Naive thymus-derived CD4-positive, alpha-beta T cell (primary cell): ENCODE measurements at regions of chr1 and their contacts with region 1.

Region 1: DNA sequence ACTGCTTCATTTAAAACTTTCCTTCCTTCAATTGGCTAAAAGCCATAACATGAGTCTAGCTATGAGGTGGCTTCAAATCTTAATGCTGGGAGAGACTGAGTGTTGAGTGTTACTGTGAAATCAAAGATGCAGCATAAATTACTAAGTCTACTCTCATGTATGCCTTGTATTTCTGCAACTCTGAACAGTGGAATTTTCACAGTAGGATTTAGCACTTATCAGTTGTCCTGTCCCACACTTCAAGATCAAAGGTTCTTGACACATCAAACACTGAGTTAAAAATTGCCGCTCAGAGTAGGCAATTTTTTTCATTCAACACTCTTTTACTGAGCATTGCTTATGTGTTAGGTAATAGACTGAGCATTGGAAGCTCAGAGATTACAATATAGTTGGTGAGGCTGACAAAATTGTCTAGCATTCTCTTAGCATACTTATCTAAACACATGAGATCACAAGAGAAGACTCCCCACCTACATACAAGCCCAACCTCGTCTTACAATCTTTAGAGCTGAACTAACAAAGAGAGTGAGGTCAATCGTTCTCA is 56.4 kb upstream of the ADORA3 start:
- DNase-seq: no peak
- ATAC-seq: no peak
- H3K4me3 ChIP-seq: no peak overlapping the region
- H3K4me3 Mint-ChIP-seq: no peak overlapping the region
- H3K27ac ChIP-seq: no peak overlapping the region
- H3K27ac Mint-ChIP-seq: no peak overlapping the region
- H3K4me1 ChIP-seq: no peaks in the 10 kb centered on the region
- H3K4me1 Mint-ChIP-seq: peaks cover 0 to 6% (median 4%) of the 10 kb centered on the region in 7 donors
- H3K27me3 ChIP-seq: no peaks in the 10 kb centered on the region
- H3K27me3 Mint-ChIP-seq: peaks cover 0 to 4% (median 0%) of the 10 kb centered on the region in 5 donors

Region 2: GRCh38 chr1:110746579-110747160 is 813.1 kb before region 1 on chr1:
- CTCF ChIA-PET with region 1: no interaction called
- POLR2A ChIA-PET with region 1: no interaction called
- intact Hi-C with region 1: no loop called
- DNase-seq: peak; percentile 14 to 62 (median 44)
- ATAC-seq: peak; percentile 46
- H3K4me3 ChIP-seq: no peak overlapping the region
- H3K4me3 Mint-ChIP-seq: no peak overlapping the region
- H3K27ac ChIP-seq: no peak overlapping the region
- H3K27ac Mint-ChIP-seq: no peak overlapping the region
- H3K4me1 ChIP-seq: no peaks in the 10 kb centered on the region
- H3K4me1 Mint-ChIP-seq: no peaks in the 10 kb centered on the region
- H3K27me3 ChIP-seq: no peaks in the 10 kb centered on the region
- H3K27me3 Mint-ChIP-seq: peaks cover 25 to 49% (median 30%) of the 10 kb centered on the region in 5 donors

Region 3: DNA sequence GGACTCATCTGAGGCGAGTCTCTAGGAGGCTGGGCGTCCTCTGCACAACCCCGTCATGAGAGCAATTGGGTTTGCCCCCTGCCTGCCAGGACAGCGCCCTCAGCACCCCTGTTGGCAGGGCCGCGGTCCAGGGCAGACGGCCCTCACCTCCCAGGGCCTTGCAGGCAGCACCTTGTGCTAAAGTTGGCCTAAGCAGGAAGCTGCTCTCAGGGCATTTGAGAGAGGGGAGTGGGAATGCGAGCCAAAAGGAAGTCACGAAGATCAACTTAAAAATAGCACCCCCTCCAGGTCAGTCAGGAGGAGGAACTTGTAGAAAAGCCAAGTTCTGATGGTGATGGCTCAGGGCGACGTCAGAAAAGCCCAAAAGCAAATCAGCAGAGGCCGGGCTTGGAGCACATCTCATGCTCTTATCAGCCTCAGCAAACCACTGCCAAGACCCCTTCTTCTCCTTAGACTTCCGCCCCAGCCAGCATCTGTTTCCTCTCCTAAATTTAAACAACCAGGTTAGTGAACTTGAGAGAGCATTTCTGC is 43.7 kb before region 1 on chr1:
- CTCF ChIA-PET with region 1: no interaction called
- POLR2A ChIA-PET with region 1: no interaction called
- intact Hi-C with region 1: loop called in 1 of 2 experiments (anchors 5 kb)
- DNase-seq: peak in 8 of 9 donors; percentile 23 to 69 (median 62)
- ATAC-seq: peak; percentile 79
- H3K4me3 ChIP-seq: peak overlapping the region; percentile 53
- H3K4me3 Mint-ChIP-seq: peak overlapping the region; percentile 71 to 89 (median 84)
- H3K27ac ChIP-seq: peak overlapping the region; percentile 43
- H3K27ac Mint-ChIP-seq: peak overlapping the region in 8 of 9 donors; percentile 69 to 90 (median 79)
- H3K4me1 ChIP-seq: peaks cover 38 to 43% of the 10 kb centered on the region in 2 donors
- H3K4me1 Mint-ChIP-seq: peaks cover 27 to 42% (median 38%) of the 10 kb centered on the region in 7 donors
- H3K27me3 ChIP-seq: no peaks in the 10 kb centered on the region
- H3K27me3 Mint-ChIP-seq: peaks cover 0 to 2% (median 0%) of the 10 kb centered on the region in 5 donors

Region 4: DNA sequence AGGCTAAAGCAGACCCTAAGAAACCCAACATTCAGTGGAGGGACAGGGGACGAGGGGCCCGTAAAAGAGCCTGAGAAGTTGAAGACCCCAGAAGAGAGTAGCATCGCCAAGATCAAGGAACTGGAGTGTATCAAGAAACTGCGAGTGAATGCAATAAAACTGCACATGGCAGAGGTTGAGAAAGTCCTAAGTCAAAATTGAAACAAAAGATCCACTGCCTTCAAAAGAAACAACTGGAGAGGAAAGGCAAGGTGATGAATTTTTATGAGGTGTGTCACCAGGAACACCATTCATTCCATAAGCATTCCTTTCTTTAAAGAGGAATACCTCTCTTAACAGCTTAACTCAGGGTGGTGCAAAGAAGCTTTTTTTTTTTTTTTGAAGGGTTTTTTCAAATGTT is 18.1 kb before region 1 on chr1:
- CTCF ChIA-PET with region 1: no interaction called
- POLR2A ChIA-PET with region 1: no interaction called
- intact Hi-C with region 1: no loop called
- DNase-seq: no peak
- ATAC-seq: no peak
- H3K4me3 ChIP-seq: no peak overlapping the region
- H3K4me3 Mint-ChIP-seq: no peak overlapping the region
- H3K27ac ChIP-seq: no peak overlapping the region
- H3K27ac Mint-ChIP-seq: no peak overlapping the region
- H3K4me1 ChIP-seq: no peaks in the 10 kb centered on the region
- H3K4me1 Mint-ChIP-seq: peaks cover 0 to 11% (median 4%) of the 10 kb centered on the region in 7 donors
- H3K27me3 ChIP-seq: no peaks in the 10 kb centered on the region
- H3K27me3 Mint-ChIP-seq: peaks cover 0 to 36% (median 0%) of the 10 kb centered on the region in 5 donors

Region 5: DNA sequence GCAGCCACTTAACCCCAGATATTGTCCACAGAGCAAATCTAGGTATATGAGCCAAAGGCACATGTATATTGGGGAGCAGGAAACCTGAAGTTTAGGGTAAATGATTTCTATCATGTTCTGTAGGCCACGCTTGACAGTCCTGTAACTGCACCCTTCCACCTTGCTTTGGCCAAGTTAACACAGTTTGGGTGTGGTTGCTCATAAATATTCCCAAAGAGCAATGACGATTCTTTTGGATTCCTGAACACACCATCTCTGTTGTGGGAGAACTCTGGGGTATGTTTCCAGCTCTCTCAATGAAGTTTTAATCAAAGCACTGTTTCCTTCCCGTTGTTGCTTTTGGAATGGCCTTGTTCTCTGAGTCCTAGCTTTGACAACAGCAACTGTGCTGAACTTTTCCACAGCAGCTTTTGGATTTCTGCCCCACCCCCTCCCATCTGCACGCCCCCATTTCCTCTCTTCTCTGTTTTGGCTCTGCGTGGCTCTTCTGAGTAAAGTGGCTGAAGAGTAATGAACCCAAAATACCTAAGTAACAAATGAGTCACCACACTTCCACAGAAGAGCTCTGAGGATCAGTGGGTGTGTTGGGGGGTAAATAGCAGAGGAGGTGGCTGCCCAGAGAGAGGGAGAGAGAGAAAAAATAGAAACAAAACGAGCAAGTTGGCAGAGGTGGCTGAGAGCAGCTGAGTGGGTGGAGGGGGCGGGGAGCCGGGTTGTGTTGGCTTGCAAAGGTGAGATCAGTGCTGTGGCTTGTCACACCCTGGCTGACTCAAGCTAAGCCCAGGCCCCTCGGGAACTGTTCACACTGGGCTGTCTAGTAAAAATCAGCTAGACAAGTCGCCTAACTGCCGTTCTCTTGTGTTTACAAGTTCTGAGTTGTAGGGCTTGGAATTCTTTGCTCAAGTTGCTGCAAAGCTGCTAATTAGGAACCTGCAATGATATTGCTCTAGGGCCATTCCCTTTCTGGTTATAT is 32.9 kb after region 1 on chr1:
- CTCF ChIA-PET with region 1: interaction called, 3 read pairs
- POLR2A ChIA-PET with region 1: interaction called, 3 read pairs
- intact Hi-C with region 1: loop called in 1 of 2 experiments (anchors 1 kb)
- DNase-seq: peak; percentile 22 to 86 (median 56)
- ATAC-seq: peak; percentile 91
- H3K4me3 ChIP-seq: peak overlapping the region; percentile 29
- H3K4me3 Mint-ChIP-seq: peak overlapping the region; percentile 52 to 82 (median 78)
- H3K27ac ChIP-seq: peak overlapping the region; percentile 62
- H3K27ac Mint-ChIP-seq: peak overlapping the region; percentile 83 to 95 (median 91)
- H3K4me1 ChIP-seq: peaks cover 55 to 65% of the 10 kb centered on the region in 2 donors
- H3K4me1 Mint-ChIP-seq: peaks cover 46 to 72% (median 62%) of the 10 kb centered on the region in 7 donors
- H3K27me3 ChIP-seq: no peaks in the 10 kb centered on the region
- H3K27me3 Mint-ChIP-seq: peaks cover 0 to 2% (median 0%) of the 10 kb centered on the region in 5 donors

Region 6: DNA sequence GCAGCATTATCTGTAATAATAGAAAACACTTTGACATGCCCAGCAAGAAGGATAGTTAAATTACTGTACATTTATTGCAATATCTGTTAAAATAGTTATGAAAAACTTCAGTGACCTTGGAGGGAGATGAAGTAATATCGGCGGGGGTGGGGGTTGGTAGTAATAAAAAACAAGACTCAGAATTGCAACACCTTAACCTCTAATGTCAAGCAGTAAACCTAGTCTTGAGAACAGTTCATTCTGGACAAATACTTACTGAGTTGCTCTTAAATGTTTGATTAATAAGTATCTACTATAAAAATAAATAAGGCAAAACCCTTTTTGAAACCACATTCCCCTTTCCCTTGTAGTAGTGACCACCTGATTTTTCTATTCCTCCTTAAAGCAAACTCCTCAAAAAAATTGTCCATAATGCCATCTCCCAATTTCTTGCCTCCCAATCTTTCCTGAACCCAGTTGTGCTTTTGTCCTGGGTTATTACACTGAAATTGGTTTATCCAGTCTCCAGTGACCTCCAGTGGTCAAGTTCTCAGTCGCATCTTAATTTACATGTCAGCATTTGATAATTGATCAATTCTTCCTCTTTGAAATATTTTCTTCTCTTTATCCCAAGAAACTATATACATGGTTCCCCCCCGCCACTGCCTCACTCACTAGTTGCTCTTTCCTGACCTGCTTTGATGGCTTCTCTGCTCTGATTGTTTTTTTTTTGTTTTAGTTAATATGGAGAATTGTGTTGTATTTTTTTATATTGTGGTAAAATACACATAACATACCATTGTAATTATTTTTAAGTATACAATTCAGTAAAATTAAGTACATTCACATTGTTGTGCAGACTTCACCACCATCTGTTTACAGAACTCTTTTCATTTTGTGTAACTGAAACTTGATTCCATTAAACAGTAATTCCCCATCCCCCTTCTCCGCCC is 96.5 kb after region 1 on chr1:
- CTCF ChIA-PET with region 1: interaction called, 4 read pairs
- POLR2A ChIA-PET with region 1: no interaction called
- intact Hi-C with region 1: loop called in 1 of 2 experiments (anchors 1 kb)
- DNase-seq: peak in 4 of 9 donors; percentile 15 to 36 (median 20)
- ATAC-seq: no peak
- H3K4me3 ChIP-seq: no peak overlapping the region
- H3K4me3 Mint-ChIP-seq: peak overlapping the region in 6 of 10 donors; percentile 2 to 52 (median 38)
- H3K27ac ChIP-seq: no peak overlapping the region
- H3K27ac Mint-ChIP-seq: peak overlapping the region in 8 of 9 donors; percentile 9 to 84 (median 37)
- H3K4me1 ChIP-seq: peaks cover 38 to 54% of the 10 kb centered on the region in 2 donors
- H3K4me1 Mint-ChIP-seq: peaks cover 34 to 56% (median 45%) of the 10 kb centered on the region in 7 donors
- H3K27me3 ChIP-seq: no peaks in the 10 kb centered on the region
- H3K27me3 Mint-ChIP-seq: no peaks in the 10 kb centered on the region

Region 7: GRCh38 chr1:111679541-111679940 is 119.7 kb after region 1 on chr1:
- CTCF ChIA-PET with region 1: no interaction called
- POLR2A ChIA-PET with region 1: no interaction called
- intact Hi-C with region 1: no loop called
- DNase-seq: no peak
- ATAC-seq: no peak
- H3K4me3 ChIP-seq: no peak overlapping the region
- H3K4me3 Mint-ChIP-seq: no peak overlapping the region
- H3K27ac ChIP-seq: no peak overlapping the region
- H3K27ac Mint-ChIP-seq: peak overlapping the region in 1 of 9 donors; percentile 58
- H3K4me1 ChIP-seq: no peaks in the 10 kb centered on the region
- H3K4me1 Mint-ChIP-seq: peaks cover 11 to 46% (median 35%) of the 10 kb centered on the region in 7 donors
- H3K27me3 ChIP-seq: no peaks in the 10 kb centered on the region
- H3K27me3 Mint-ChIP-seq: no peaks in the 10 kb centered on the region

Region 8: DNA sequence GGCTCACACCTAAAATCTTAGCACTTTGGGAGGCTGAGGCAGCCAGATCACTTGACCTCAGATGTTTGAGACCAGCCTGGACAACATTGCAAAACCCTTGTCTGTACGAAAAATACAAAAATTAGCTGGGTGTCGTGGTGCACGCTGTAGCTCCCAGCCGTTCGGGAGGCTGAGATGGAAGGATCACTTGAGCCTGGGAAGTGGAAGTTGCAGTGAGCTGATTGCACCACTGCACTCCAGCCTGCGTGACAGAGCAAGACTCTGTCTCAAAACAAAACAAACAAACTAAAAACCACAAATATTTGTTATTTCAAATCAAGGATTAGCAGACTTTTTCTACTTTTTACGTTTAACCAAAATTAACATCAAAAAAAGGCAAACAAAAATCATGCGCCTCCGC is 148.1 kb after region 1 on chr1:
- CTCF ChIA-PET with region 1: interaction called, 3 read pairs
- POLR2A ChIA-PET with region 1: interaction called, 3 read pairs
- intact Hi-C with region 1: loop called in 1 of 2 experiments (anchors 5 kb)
- DNase-seq: no peak
- ATAC-seq: no peak
- H3K4me3 ChIP-seq: no peak overlapping the region
- H3K4me3 Mint-ChIP-seq: no peak overlapping the region
- H3K27ac ChIP-seq: no peak overlapping the region
- H3K27ac Mint-ChIP-seq: peak overlapping the region in 6 of 9 donors; percentile 21 to 77 (median 52)
- H3K4me1 ChIP-seq: no peaks in the 10 kb centered on the region
- H3K4me1 Mint-ChIP-seq: peaks cover 0 to 23% (median 3%) of the 10 kb centered on the region in 7 donors
- H3K27me3 ChIP-seq: no peaks in the 10 kb centered on the region
- H3K27me3 Mint-ChIP-seq: no peaks in the 10 kb centered on the region